Activated T-helper 1 cell treated with anti-CD3 and anti-CD28 coated beads, Interleukin-12 subunit alpha, Interleukin-12 subunit beta, Interleukin-2, Interleukin-4 antibody, amounts not matched to agents 30 ng/mL and 10 ng/mL and 1 ng/mL, durations not matched to agents 14 hours and 24 hours and 36 hours (primary cell): ENCODE measurements at regions of chr11 and their contacts with region 1.

Region 1: GRCh38 chr11:14907411-14908213 is 15.6 kb upstream of the CYP2R1 start:
- DNase-seq: peak; percentile 76
- H3K4me3 Mint-ChIP-seq: peak overlapping the region; percentile 23
- H3K27ac Mint-ChIP-seq: no peak overlapping the region
- H3K4me1 Mint-ChIP-seq: peaks cover 63% of the 10 kb centered on the region
- H3K27me3 Mint-ChIP-seq: no peaks in the 10 kb centered on the region

Region 2: DNA sequence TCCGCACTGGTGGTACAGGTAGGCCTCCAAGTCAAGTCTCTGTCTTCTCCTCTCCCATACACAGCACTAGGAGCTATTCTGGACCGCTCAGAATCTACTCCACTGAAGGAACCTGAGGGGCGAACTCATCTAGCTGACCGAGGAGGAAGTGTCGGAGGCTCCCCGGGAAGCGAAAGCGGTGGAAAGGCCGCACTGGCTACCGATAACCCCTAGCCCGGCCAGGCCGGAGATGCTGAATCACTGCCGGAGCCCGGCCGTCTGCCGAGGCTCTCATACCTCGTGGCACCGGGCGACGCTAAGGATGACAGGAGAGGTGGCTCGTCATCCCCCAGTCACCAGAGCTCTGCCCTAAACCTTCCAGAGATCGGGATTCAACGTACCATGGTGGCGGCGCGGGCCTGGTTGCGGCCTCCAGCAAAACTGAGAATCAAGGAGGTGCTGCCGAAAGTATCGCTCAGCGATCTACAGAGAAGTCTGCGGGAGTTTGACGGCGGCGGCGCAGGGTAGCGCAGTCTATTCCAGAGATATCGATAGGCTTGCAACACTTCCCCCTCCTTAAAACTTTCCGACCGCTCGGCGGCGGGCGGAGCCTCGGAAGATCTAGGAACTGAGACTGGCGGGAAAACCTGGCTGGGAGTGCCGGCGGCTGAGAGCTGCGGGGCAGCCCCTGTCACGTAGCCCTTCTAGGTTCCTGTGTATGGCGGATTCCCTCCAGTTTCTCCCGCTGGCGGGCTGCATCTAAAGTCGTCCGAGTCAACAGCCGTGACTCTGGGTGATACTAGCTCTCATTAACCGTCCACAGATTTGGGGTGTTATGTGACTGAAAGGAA is 387.5 kb before region 1 on chr11 and contains the start of gene PSMA1:
- intact Hi-C with region 1: loop called (anchors 1 kb)
- DNase-seq: peak; percentile 92
- H3K4me3 Mint-ChIP-seq: peak within 1 kb of the TSS; percentile 94
- H3K27ac Mint-ChIP-seq: peak within 1 kb of the TSS; percentile 94
- H3K4me1 Mint-ChIP-seq: peaks cover 33% of the 10 kb centered on the region
- H3K27me3 Mint-ChIP-seq: no peaks in the 10 kb centered on the region
- total RNA-seq, gene PSMA1: 313 and 340 TPM in 2 replicates

Region 3: DNA sequence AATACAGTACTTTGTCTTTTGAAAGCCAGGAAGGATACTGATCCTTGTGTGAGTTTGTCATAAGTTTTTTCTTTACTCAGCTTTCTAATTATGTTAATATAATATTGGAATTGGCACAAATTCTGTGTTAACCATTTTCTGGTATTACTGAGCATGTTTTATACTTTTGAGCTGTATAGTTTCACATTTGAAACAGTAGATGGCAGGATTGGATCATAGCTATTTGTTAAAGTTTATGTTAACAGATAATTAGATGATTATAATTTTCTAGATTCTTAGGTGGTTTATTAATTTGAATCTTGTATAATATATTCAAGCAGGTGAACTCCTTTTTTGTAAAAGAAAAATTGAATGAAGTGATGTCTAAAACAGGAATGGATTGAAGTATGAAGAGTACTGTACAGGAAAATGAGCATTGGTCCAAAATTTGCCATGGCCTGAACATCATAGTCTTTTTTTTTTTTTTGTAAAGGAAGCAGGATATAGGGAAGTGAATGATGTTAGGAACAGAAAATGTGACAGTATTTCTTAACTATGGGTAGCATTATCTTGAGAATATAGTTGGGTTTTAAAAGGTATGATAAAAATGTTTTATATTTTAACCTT is 117.6 kb before region 1 on chr11:
- intact Hi-C with region 1: loop called (anchors 1 kb)
- DNase-seq: no peak
- H3K4me3 Mint-ChIP-seq: no peak overlapping the region
- H3K27ac Mint-ChIP-seq: peak overlapping the region; percentile 18
- H3K4me1 Mint-ChIP-seq: peaks cover 15% of the 10 kb centered on the region
- H3K27me3 Mint-ChIP-seq: no peaks in the 10 kb centered on the region

Region 4: DNA sequence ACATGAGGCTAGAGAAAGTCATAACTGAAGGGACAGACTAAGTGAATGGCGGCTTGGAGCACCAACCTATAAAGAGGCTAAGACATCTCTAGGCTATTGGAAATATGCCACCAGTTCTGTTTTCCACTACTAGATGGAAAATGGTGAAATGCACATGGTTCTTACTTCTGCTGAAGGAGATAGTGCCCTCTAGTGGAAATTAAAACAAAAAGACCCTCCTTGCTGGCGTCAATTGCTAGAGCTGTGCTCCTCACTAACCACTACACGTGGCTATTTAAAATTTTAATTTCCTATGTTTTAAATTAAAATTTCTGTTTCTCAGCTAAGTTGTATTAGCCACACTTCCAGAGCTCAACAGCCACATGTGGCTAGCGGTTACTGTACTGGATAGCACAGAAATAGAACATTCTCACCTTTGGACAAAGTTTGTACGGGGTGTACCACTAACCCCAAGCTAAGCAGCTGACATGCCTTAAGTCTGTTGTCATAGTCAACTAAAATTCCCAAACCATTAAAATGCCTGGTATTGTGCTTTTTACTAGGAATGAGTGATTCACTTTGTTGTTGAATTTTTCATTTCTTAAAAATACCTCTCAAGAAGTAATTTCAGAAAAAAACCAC is 98.6 kb after region 1 on chr11:
- intact Hi-C with region 1: loop called (anchors 1 kb)
- DNase-seq: no peak
- H3K4me3 Mint-ChIP-seq: no peak overlapping the region
- H3K27ac Mint-ChIP-seq: no peak overlapping the region
- H3K4me1 Mint-ChIP-seq: no peaks in the 10 kb centered on the region
- H3K27me3 Mint-ChIP-seq: peaks cover 55% of the 10 kb centered on the region

Region 5: GRCh38 chr11:15159085-15159484 is 251.5 kb after region 1 on chr11:
- intact Hi-C with region 1: loop called (anchors 1 kb)
- DNase-seq: no peak
- H3K4me3 Mint-ChIP-seq: no peak overlapping the region
- H3K27ac Mint-ChIP-seq: no peak overlapping the region
- H3K4me1 Mint-ChIP-seq: no peaks in the 10 kb centered on the region
- H3K27me3 Mint-ChIP-seq: peaks cover 11% of the 10 kb centered on the region